HCT116 (cell line): ENCODE measurements at regions of chr4 and their contacts with region 1.

Region 1: DNA sequence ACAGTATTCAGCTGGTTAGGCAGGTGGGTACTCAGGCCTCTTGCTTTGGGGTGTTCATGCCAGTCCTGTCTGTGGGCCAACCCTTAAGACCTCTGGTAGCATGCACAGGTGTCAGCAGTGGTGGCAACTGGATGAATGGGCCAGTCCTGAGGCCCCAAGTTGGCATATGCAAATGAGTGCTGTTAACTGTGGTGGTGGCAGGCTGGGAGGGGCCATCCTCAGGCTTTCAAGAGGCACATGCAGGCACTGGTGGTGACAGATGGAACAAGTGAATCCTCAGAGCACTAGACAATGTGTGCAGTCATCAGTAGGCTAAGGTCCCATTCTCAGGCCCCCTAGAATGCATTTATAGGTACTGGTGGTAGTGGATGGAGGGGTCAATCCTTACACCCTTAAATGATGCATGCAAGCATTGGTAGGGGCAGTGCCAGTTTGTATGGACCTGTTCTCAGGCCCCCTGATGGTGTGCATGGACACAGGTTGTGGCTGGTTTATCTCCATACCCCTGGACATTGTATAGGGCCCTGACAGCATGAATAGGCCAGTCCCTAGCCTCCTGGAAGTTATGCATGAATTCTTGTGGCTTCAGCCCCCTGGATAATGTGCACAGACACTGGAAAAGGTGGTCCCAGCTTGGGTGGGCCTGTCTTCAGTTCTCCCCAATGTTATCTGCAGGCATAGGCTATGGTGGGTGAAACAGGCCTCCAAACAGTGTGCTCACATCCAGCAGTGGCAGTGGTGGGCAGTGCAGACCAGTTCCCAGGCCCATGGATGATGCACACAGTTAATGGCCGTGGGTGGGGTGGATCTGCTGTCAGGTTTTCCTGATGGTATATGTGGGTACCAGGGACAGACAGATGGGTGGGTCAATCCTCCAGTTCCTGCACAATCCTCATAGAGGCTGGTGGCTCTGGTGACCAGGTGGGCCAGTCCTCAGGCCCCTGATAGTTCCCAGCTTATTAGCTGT is 24.7 kb downstream of the TECRL start:
- DNase-seq: no peak
- ATAC-seq: no peak
- H3K4me3 ChIP-seq: no peak overlapping the region
- H3K27ac ChIP-seq: no peak overlapping the region
- H3K4me1 ChIP-seq: no peaks in the 10 kb centered on the region
- H3K27me3 ChIP-seq: no peaks in the 10 kb centered on the region
- CTCF ChIP-seq: no peak
- POLR2A ChIP-seq: no peak
- RAD21 ChIP-seq: no peak

Region 2: GRCh38 chr4:64417974-64418373 is 33.5 kb after region 1 on chr4:
- CTCF ChIA-PET with region 1: no interaction called
- POLR2A ChIA-PET with region 1: no interaction called
- RAD21 ChIA-PET with region 1: no interaction called
- intact Hi-C with region 1: loop called (anchors 5 kb)
- DNase-seq: no peak
- ATAC-seq: no peak
- H3K4me3 ChIP-seq: no peak overlapping the region
- H3K27ac ChIP-seq: no peak overlapping the region
- H3K4me1 ChIP-seq: no peaks in the 10 kb centered on the region
- H3K27me3 ChIP-seq: no peaks in the 10 kb centered on the region
- CTCF ChIP-seq: no peak
- POLR2A ChIP-seq: no peak
- RAD21 ChIP-seq: no peak

Region 3: GRCh38 chr4:64432674-64433073 is 48.2 kb after region 1 on chr4:
- CTCF ChIA-PET with region 1: no interaction called
- POLR2A ChIA-PET with region 1: no interaction called
- RAD21 ChIA-PET with region 1: no interaction called
- intact Hi-C with region 1: no loop called
- DNase-seq: no peak
- ATAC-seq: no peak
- H3K4me3 ChIP-seq: no peak overlapping the region
- H3K27ac ChIP-seq: no peak overlapping the region
- H3K4me1 ChIP-seq: no peaks in the 10 kb centered on the region
- H3K27me3 ChIP-seq: no peaks in the 10 kb centered on the region
- CTCF ChIP-seq: no peak
- POLR2A ChIP-seq: no peak
- RAD21 ChIP-seq: no peak